Common myeloid progenitor, CD34-positive (primary cell): ENCODE measurements at regions of chr7 and their contacts with region 1.

Region 1: GRCh38 chr7:30142710-30143109 is 7.9 kb downstream of the MTURN start:
- DNase-seq: peak in 1 of 3 donors; percentile 10
- H3K4me3 ChIP-seq: peak overlapping the region in 2 of 7 experiments; percentile 2 to 46
- H3K27ac ChIP-seq: peak overlapping the region; percentile 83 to 94
- H3K4me1 ChIP-seq: peaks cover 43 to 93% (median 67%) of the 10 kb centered on the region in 4 experiments
- H3K27me3 ChIP-seq: no peaks in the 10 kb centered on the region

Region 2: GRCh38 chr7:30155481-30155880 is 12.8 kb after region 1 on chr7:
- CTCF ChIA-PET with region 1: interaction called, 15 read pairs
- POLR2A ChIA-PET with region 1: interaction called, 11 read pairs
- DNase-seq: no peak
- H3K4me3 ChIP-seq: no peak overlapping the region
- H3K27ac ChIP-seq: no peak overlapping the region
- H3K4me1 ChIP-seq: peaks cover 14 to 40% (median 31%) of the 10 kb centered on the region in 4 experiments
- H3K27me3 ChIP-seq: no peaks in the 10 kb centered on the region

Region 3: GRCh38 chr7:30164567-30164966 is 21.9 kb after region 1 on chr7:
- CTCF ChIA-PET with region 1: interaction called, 15 read pairs
- POLR2A ChIA-PET with region 1: interaction called, 4 read pairs
- DNase-seq: peak; percentile 41 to 63 (median 57)
- H3K4me3 ChIP-seq: no peak overlapping the region
- H3K27ac ChIP-seq: no peak overlapping the region
- H3K4me1 ChIP-seq: peaks cover 39 to 54% (median 47%) of the 10 kb centered on the region in 4 experiments
- H3K27me3 ChIP-seq: no peaks in the 10 kb centered on the region